Heart right ventricle (tissue), 16 donors: ENCODE measurements at regions of chr21 and their contacts with region 1.

Region 1: GRCh38 chr21:37916310-37917051 is at the start of gene KCNJ6:
- DNase-seq: no peak
- ATAC-seq: peak in 6 of 8 donors; percentile 61 to 73 (median 64)
- H3K4me3 ChIP-seq: peak within 1 kb of the TSS; percentile 3 to 36 (median 28)
- H3K27ac ChIP-seq: no peak within 1 kb of the TSS
- H3K4me1 ChIP-seq: peaks cover 8 to 21% (median 15%) of the 10 kb centered on the region in 9 donors
- H3K27me3 ChIP-seq: peaks cover 18 to 81% (median 68%) of the 10 kb centered on the region in 7 donors
- CTCF ChIP-seq: peak in 8 of 9 donors; percentile 26 to 59 (median 56)
- total RNA-seq, gene KCNJ6: not detected

Region 2: GRCh38 chr21:37700641-37701202 is 215.8 kb before region 1 on chr21:
- intact Hi-C with region 1: loop called in 1 of 10 experiments (anchors 5 kb)
- DNase-seq: peak in 1 of 2 donors; percentile 11
- ATAC-seq: peak in 7 of 8 donors; percentile 29 to 85 (median 70)
- H3K4me3 ChIP-seq: no peak overlapping the region
- H3K27ac ChIP-seq: no peak overlapping the region
- H3K4me1 ChIP-seq: no peaks in the 10 kb centered on the region
- H3K27me3 ChIP-seq: peaks cover 0 to 13% (median 0%) of the 10 kb centered on the region in 7 donors
- CTCF ChIP-seq: peak; percentile 33 to 75 (median 65)

Region 3: GRCh38 chr21:37711836-37712568 is 204.5 kb before region 1 on chr21:
- intact Hi-C with region 1: loop called in 9 of 10 experiments (anchors 2 to 10 kb)
- DNase-seq: peak; percentile 59 to 63
- ATAC-seq: peak; percentile 73 to 91 (median 82)
- H3K4me3 ChIP-seq: no peak overlapping the region
- H3K27ac ChIP-seq: no peak overlapping the region
- H3K4me1 ChIP-seq: peaks cover 0 to 20% (median 12%) of the 10 kb centered on the region in 9 donors
- H3K27me3 ChIP-seq: peaks cover 0 to 6% (median 0%) of the 10 kb centered on the region in 7 donors
- CTCF ChIP-seq: peak; percentile 61 to 86 (median 80)

Region 4: DNA sequence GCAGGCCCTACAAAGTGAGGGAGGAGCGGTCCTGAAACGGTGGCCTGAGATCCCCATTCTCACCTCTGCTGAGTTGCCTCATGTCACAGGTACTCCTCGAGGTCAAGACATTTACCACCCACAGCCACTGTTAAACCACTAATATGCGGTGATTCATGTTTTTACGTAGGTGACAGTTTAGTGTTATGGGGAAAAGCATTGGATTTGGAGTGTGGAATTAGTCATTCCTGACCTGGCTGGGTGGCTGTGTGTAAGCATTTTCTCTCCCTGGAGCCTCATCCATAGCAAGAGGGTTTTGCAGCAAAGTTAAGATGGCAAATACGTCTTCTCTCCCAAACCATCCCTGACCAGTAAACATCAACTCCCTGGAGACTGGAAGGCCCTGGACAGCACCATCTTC is 57.6 kb after region 1 on chr21:
- intact Hi-C with region 1: no loop called
- DNase-seq: no peak
- ATAC-seq: no peak
- H3K4me3 ChIP-seq: no peak overlapping the region
- H3K27ac ChIP-seq: no peak overlapping the region
- H3K4me1 ChIP-seq: no peaks in the 10 kb centered on the region
- H3K27me3 ChIP-seq: peaks cover 0 to 47% (median 26%) of the 10 kb centered on the region in 7 donors
- CTCF ChIP-seq: no peak

Region 5: DNA sequence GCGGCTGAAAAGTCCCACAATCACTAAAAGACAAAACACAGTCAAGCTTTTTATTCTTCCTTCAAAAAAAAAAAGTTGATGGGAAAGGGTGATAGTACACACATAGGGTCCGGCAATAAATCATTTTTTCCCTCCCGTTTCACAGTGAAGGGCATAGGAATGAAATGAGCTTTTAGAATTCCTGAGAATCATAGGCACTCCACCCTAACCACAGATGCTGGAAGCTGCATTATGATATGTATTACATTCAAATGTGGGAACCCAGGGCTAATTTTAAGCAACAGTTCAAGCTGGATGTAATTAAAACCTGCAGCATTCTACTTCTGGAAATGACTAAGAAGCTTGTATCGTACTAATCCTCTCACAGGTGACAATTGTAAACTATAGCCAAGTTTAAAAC is 264.6 kb after region 1 on chr21:
- intact Hi-C with region 1: no loop called
- DNase-seq: no peak
- ATAC-seq: no peak
- H3K4me3 ChIP-seq: no peak overlapping the region
- H3K27ac ChIP-seq: no peak overlapping the region
- H3K4me1 ChIP-seq: peaks cover 0 to 7% (median 0%) of the 10 kb centered on the region in 9 donors
- H3K27me3 ChIP-seq: peaks cover 0 to 5% (median 0%) of the 10 kb centered on the region in 7 donors
- CTCF ChIP-seq: no peak